K562 (cell line): ENCODE measurements at regions of chr1 and their contacts with region 1.

Region 1: GRCh38 chr1:236489710-236490377 is 33.9 kb upstream of the LGALS8 start:
- DNase-seq: peak; percentile 62 to 77 (median 64)
- ATAC-seq: peak; percentile 85
- H3K4me3 ChIP-seq: no peak overlapping the region
- H3K27ac ChIP-seq: no peak overlapping the region
- H3K4me1 ChIP-seq: peaks cover 0 to 6% of the 10 kb centered on the region in 2 experiments; a peak in 3 of 5 replicates
- H3K27me3 ChIP-seq: peaks cover 9 to 15% of the 10 kb centered on the region in 2 experiments; a peak in 4 of 5 replicates
- CTCF ChIP-seq: peak; percentile 54 to 74 (median 70)
- EP300 ChIP-seq: no peak
- POLR2A ChIP-seq: no peak
- RAD21 ChIP-seq: peak; percentile 78 to 88

Region 2: DNA sequence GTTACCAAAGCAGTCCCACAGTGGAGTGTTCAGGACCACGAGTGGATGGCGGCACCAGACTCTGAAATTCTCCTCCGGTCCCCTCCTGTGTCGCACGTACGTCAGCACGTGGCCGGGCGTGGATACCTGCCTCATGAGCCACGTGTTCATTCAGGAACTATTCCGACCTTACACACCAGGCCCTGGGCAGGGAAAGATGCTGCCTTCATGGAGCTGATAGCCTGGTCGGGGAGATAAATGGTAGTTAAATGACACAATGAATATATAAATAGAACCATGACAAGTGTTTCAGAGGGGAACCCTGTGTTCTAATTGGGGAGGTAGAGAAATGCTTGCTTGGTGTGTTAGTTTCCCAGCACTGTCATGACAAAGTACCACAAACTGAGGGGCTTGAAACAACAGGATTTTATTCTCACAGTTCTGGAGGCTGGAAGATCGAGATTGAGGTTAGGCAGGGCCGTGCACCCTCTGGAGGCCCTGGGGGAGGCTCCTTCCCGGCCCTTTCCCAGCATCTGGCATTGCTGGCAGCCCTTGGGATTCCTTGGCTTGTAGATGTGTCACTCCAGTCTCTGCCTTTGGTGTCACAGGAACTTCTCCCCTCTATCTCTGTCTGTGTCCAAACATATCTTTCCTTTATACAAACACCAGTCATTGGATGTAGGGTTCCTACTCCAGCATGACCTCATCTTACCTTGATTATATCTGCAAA is 376.4 kb before region 1 on chr1:
- CTCF ChIA-PET with region 1: interaction called, 27 read pairs
- POLR2A ChIA-PET with region 1: interaction called, 4 read pairs
- in situ Hi-C with region 1: loop called (anchors 5 kb)
- intact Hi-C with region 1: loop called (anchors 1 kb)
- DNase-seq: no peak
- ATAC-seq: no peak
- H3K4me3 ChIP-seq: no peak overlapping the region
- H3K27ac ChIP-seq: no peak overlapping the region
- H3K4me1 ChIP-seq: peaks cover 0 to 5% of the 10 kb centered on the region in 2 experiments; a peak in 3 of 5 replicates
- H3K27me3 ChIP-seq: peaks cover 2 to 35% of the 10 kb centered on the region in 2 experiments; a peak in 3 of 5 replicates
- CTCF ChIP-seq: no peak
- EP300 ChIP-seq: no peak
- POLR2A ChIP-seq: no peak
- RAD21 ChIP-seq: no peak

Region 3: DNA sequence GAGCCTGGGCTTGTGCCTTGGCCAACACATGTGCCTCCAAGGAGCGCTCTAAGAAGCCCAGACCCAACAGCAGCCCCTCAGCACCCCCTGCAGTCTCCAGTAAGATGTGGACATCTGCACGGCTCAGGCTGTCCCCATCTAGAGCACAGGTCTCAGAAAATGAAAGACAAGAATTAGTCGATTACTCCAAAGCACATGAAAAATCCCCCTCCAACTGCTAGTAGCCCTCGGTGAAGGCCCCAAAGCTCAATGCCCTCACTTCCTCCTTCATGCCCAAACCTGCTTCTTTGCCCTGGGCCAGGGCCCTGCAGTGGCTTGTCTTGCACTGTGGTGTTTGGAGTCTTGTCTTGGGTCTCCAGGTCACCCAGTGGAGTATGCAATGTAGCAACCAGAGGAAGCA is 186.2 kb before region 1 on chr1:
- CTCF ChIA-PET with region 1: no interaction called
- POLR2A ChIA-PET with region 1: no interaction called
- in situ Hi-C with region 1: no loop called
- intact Hi-C with region 1: loop called (anchors 5 kb)
- DNase-seq: peak in 2 of 4 experiments; percentile 32 to 43
- ATAC-seq: peak; percentile 90
- H3K4me3 ChIP-seq: no peak overlapping the region
- H3K27ac ChIP-seq: no peak overlapping the region
- H3K4me1 ChIP-seq: peaks cover 0 to 3% of the 10 kb centered on the region in 2 experiments; a peak in 1 of 5 replicates
- H3K27me3 ChIP-seq: no peaks in the 10 kb centered on the region
- CTCF ChIP-seq: peak; percentile 47 to 64 (median 59)
- EP300 ChIP-seq: no peak
- POLR2A ChIP-seq: no peak
- RAD21 ChIP-seq: peak; percentile 32 to 81; a peak in 3 of 4 replicates

Region 4: GRCh38 chr1:236354330-236355147 is 135.3 kb before region 1 on chr1:
- CTCF ChIA-PET with region 1: no interaction called
- POLR2A ChIA-PET with region 1: no interaction called
- in situ Hi-C with region 1: no loop called
- intact Hi-C with region 1: loop called (anchors 5 kb)
- DNase-seq: peak in 2 of 4 experiments; percentile 66 to 74
- ATAC-seq: peak; percentile 22
- H3K4me3 ChIP-seq: no peak overlapping the region
- H3K27ac ChIP-seq: peak overlapping the region; percentile 47; the same call in 2 of the 3 replicates
- H3K4me1 ChIP-seq: peaks cover 28 to 55% of the 10 kb centered on the region in 2 experiments
- H3K27me3 ChIP-seq: no peaks in the 10 kb centered on the region
- CTCF ChIP-seq: no peak
- EP300 ChIP-seq: peak; percentile 54; the same call in 1 of the 2 replicates
- POLR2A ChIP-seq: 0 out of 2 replicates have a peak, but pooled peaks have one; percentile 20
- RAD21 ChIP-seq: no peak

Region 5: DNA sequence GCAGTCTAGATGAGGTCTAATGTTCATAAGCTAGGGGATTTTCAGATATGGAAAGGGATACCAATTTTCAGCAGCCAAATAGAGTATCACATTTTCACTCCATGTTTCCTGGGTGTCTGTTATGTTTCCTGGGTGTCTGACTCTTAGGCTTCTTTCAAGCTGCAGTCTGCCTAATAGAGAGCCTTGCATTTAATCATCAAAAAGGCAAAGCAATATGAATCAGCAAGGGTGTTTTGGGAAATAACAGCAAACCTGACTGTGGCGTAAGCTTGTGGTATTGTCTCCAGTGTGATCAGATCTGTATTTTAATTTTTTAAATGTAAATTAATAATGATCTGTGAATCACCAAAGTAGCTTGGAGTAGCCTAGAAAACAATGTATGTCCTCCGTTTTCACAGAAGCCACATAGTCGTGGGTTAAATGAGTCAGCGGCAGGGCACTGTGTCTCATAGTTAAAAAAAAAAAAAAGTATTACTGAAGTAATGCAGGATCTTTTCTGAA is 44.4 kb after region 1 on chr1:
- CTCF ChIA-PET with region 1: no interaction called
- POLR2A ChIA-PET with region 1: no interaction called
- in situ Hi-C with region 1: no loop called
- intact Hi-C with region 1: loop called (anchors 5 kb)
- DNase-seq: no peak
- ATAC-seq: no peak
- H3K4me3 ChIP-seq: no peak overlapping the region
- H3K27ac ChIP-seq: no peak overlapping the region
- H3K4me1 ChIP-seq: peaks cover 16 to 22% of the 10 kb centered on the region in 2 experiments; a peak in 4 of 5 replicates
- H3K27me3 ChIP-seq: no peaks in the 10 kb centered on the region
- CTCF ChIP-seq: no peak
- EP300 ChIP-seq: no peak
- POLR2A ChIP-seq: no peak
- RAD21 ChIP-seq: no peak